MCF 10A (cell line): ENCODE measurements at regions of chr11 and their contacts with region 1.

Region 1: GRCh38 chr11:13343931-13344717 is 66.5 kb downstream of the BMAL1 start:
- DNase-seq: peak; percentile 86
- H3K4me3 Mint-ChIP-seq: no peak overlapping the region
- H3K27ac Mint-ChIP-seq: no peak overlapping the region
- H3K4me1 Mint-ChIP-seq: peaks cover 30% of the 10 kb centered on the region
- H3K27me3 Mint-ChIP-seq: no peaks in the 10 kb centered on the region
- CTCF ChIP-seq: peak; percentile 70

Region 2: DNA sequence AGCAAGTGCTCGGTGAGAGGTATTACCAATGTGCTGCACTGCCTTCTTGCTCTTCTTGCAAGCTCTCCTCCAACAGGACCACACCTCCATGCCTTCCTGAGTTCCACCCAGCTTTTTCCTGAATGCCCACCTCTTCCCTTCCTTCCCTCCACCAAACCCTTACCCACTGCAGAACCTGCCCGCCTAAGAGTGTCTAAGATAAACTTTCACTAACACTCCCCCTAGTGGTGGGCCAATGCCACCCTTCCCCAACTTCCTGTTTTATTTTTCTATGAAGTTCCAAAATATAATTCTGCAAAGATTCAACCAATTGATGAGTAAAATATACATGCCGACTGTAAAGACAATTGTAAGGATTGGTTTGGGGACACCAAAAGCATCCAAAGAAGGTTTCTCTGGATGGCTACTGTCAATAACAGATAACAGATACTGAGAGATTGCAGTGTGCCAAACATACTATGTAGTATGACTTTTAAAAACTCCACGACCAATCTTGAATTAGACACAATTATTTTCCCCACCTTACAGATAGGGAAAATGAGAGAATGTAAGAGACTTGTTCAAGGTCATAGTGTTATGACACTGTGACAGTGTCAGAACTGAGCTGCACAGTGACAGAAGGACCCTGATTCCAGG is 105.1 kb before region 1 on chr11:
- CTCF ChIA-PET with region 1: interaction called, 10 read pairs
- POLR2A ChIA-PET with region 1: interaction called, 3 read pairs
- intact Hi-C with region 1: no loop called
- DNase-seq: peak; percentile 72
- H3K4me3 Mint-ChIP-seq: no peak overlapping the region
- H3K27ac Mint-ChIP-seq: no peak overlapping the region
- H3K4me1 Mint-ChIP-seq: peaks cover 6% of the 10 kb centered on the region
- H3K27me3 Mint-ChIP-seq: no peaks in the 10 kb centered on the region
- CTCF ChIP-seq: peak; percentile 68

Region 3: GRCh38 chr11:13249996-13250395 is 94.1 kb before region 1 on chr11:
- CTCF ChIA-PET with region 1: interaction called, 242 read pairs
- POLR2A ChIA-PET with region 1: interaction called, 204 read pairs
- intact Hi-C with region 1: loop called (anchors 1 kb)
- DNase-seq: peak; percentile 36
- H3K4me3 Mint-ChIP-seq: no peak overlapping the region
- H3K27ac Mint-ChIP-seq: no peak overlapping the region
- H3K4me1 Mint-ChIP-seq: no peaks in the 10 kb centered on the region
- H3K27me3 Mint-ChIP-seq: no peaks in the 10 kb centered on the region
- CTCF ChIP-seq: peak; percentile 52

Region 4: DNA sequence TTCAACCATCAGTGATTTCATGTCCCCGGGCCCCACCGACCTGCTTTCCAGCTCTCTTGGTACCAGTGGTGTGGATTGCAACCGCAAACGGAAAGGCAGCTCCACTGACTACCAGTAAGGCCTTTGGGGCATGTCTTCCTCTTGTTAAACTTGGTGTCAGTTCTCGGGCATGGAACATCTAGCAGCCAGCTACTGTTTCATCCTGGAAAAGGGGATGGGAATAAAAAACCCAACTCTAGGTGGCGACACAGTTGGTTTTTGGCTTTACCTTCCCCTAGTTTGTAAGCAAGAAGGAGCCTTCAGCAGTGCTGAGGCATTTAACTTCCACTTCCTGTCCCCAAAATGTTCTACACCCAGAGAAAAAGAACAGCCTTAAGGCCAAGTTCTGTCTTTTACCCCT is 10.2 kb after region 1 on chr11:
- CTCF ChIA-PET with region 1: interaction called, 14 read pairs
- POLR2A ChIA-PET with region 1: no interaction called
- intact Hi-C with region 1: no loop called
- DNase-seq: peak; percentile 43
- H3K4me3 Mint-ChIP-seq: no peak overlapping the region
- H3K27ac Mint-ChIP-seq: peak overlapping the region; percentile 46
- H3K4me1 Mint-ChIP-seq: no peaks in the 10 kb centered on the region
- H3K27me3 Mint-ChIP-seq: no peaks in the 10 kb centered on the region
- CTCF ChIP-seq: no peak

Region 5: GRCh38 chr11:14163576-14163975 is 819.5 kb after region 1 on chr11:
- CTCF ChIA-PET with region 1: no interaction called
- POLR2A ChIA-PET with region 1: no interaction called
- intact Hi-C with region 1: no loop called
- DNase-seq: no peak
- H3K4me3 Mint-ChIP-seq: no peak overlapping the region
- H3K27ac Mint-ChIP-seq: no peak overlapping the region
- H3K4me1 Mint-ChIP-seq: no peaks in the 10 kb centered on the region
- H3K27me3 Mint-ChIP-seq: peaks cover 16% of the 10 kb centered on the region
- CTCF ChIP-seq: no peak